ENCODE measurements at regions of chr1 and their contacts with region 1.

Region 1: DNA sequence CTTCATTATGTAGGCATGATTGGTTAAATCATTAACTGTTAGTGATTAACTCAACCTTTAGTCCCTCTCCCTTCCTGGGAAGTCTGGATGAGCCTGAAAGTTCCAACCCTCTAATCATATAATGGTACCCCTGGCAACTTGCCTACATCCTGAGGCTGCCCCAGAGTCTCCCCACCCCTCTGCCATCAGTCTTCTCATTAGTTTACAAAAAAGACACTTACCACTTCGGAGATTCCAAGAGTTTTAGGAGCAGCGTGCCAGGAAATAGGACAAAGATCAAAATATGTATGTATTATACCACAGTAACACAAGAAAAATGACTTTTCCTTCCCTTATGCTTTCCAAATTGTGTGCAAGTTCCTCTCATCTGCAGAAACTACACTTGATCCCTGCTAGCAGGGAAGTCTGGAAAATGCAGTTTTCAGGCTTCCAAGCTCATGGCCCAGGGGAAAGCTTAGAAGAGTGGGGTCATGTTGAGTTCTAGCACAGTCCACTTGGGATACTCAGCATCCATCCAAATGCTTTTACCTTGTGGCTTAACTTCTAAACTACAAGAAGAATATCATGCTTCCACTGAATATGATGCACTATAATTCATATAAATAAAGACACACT is 64.6 kb upstream of the PPIH start:
- DNase-seq: no peak
- H3K4me3 ChIP-seq: no peak overlapping the region
- H3K27ac ChIP-seq: no peak overlapping the region
- H3K4me1 ChIP-seq: no peaks in the 10 kb centered on the region
- H3K27me3 ChIP-seq: peaks cover 3% of the 10 kb centered on the region
- CTCF ChIP-seq: no peak

Region 2: GRCh38 chr1:42747125-42747524 is 153.5 kb after region 1 on chr1:
- CTCF ChIA-PET with region 1: no interaction called
- dilution Hi-C with region 1: no loop called
- in situ Hi-C with region 1: loop called in 1 of 2 experiments (anchors 25 kb)
- intact Hi-C with region 1: no loop called
- DNase-seq: no peak
- H3K4me3 ChIP-seq: no peak overlapping the region
- H3K27ac ChIP-seq: no peak overlapping the region
- H3K4me1 ChIP-seq: peaks cover 17% of the 10 kb centered on the region
- H3K27me3 ChIP-seq: no peaks in the 10 kb centered on the region
- CTCF ChIP-seq: peak; percentile 43 to 79

Region 3: DNA sequence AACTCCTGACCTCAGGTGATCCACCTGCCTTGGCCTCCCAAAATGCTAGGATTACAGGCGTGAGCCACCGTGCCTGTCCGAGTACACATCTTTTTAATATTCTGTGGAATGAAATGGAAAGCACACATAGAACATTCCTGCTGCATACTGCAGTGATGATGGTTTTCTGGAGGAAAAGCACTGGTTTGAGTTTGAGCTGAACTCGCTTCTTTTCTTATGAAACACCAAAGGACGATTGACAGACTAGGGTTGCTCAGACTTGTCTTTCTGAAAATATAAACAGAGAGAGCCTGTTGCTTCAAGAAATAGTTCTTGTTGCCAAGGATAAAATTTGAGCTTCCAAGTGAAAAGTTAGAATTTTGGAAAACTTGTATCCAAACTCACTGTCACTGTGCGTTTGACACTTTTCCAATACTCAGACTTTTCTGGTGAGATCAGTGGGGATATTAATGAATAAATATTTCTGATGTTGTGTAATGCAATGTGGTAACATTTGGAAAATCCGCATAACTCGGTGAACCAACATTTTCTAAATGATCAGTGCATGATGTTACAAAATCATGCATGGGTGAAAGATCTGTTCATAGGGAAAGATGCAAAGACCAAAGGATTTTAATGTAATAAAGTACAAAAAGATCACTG is 208.4 kb after region 1 on chr1:
- CTCF ChIA-PET with region 1: no interaction called
- dilution Hi-C with region 1: no loop called
- in situ Hi-C with region 1: no loop called
- intact Hi-C with region 1: no loop called
- DNase-seq: no peak
- H3K4me3 ChIP-seq: no peak overlapping the region
- H3K27ac ChIP-seq: no peak overlapping the region
- H3K4me1 ChIP-seq: no peaks in the 10 kb centered on the region
- H3K27me3 ChIP-seq: peaks cover 3% of the 10 kb centered on the region
- CTCF ChIP-seq: no peak

Measured in mammary epithelial cell (primary cell).